ENCODE measurements at regions of chr10 and their contacts with region 1.

Region 1: GRCh38 chr10:97025613-97026242 is 160.0 kb downstream of the SLIT1 start:
- DNase-seq: peak in 1 of 2 donors; percentile 37
- ATAC-seq: peak in 5 of 8 donors; percentile 25 to 48 (median 35)
- H3K4me3 ChIP-seq: no peak overlapping the region
- H3K27ac ChIP-seq: peak overlapping the region in 3 of 10 donors; percentile 15 to 78 (median 21)
- H3K4me1 ChIP-seq: peaks cover 9 to 33% (median 23%) of the 10 kb centered on the region in 9 donors
- H3K27me3 ChIP-seq: no peaks in the 10 kb centered on the region
- CTCF ChIP-seq: peak; percentile 28 to 73 (median 66)

Region 2: GRCh38 chr10:96395931-96396877 is 629.5 kb before region 1 on chr10:
- intact Hi-C with region 1: loop called in 3 of 10 experiments (anchors 10 kb)
- DNase-seq: peak; percentile 58 to 65
- ATAC-seq: peak in 7 of 8 donors; percentile 44 to 77 (median 72)
- H3K4me3 ChIP-seq: no peak overlapping the region
- H3K27ac ChIP-seq: peak overlapping the region in 1 of 10 donors; percentile 64
- H3K4me1 ChIP-seq: peaks cover 0 to 51% (median 25%) of the 10 kb centered on the region in 9 donors
- H3K27me3 ChIP-seq: peaks cover 0 to 18% (median 0%) of the 10 kb centered on the region in 7 donors
- CTCF ChIP-seq: peak; percentile 65 to 92 (median 85)

Region 3: DNA sequence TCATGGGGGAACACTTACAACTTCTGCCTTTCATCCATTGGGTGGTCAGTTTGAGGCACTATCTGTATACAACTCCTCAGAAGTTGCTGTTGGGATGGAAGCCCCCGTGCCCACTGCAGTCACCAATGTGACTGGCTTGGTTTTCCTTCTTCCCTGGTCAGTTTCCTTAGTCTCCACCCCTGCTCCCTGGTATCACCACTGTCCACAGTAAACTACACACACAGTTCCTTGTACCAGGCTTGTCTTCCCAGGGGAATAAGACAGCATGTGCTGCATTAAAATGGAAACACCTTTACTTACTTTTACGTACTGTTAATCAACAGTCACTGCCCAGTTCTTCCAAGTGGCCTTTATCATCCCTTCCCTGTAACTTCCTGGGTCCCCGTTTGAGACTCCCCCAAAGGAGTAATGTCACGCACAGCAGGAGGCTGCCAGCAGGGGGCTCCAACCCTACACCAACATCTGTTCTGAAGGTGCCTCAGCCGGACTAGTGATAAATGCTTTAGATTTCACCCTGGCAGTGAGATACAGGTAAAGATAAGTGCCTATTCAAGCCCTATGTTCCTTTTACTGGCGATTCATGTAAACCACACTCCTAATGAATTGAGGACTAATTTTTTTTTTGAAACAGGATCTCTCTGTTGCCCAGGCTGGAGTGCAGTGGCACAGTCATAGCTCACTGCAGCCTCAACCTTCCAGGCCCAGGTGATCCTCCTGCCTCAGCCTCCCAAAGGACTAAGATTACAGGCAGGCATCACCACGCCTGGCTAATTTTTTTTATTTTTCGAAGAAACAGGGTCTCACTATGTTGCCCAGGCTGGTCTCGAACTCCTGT is 260.1 kb before region 1 on chr10:
- intact Hi-C with region 1: loop called in 6 of 10 experiments (anchors 1 to 10 kb)
- DNase-seq: peak; percentile 48 to 69
- ATAC-seq: peak in 5 of 8 donors; percentile 60 to 69 (median 66)
- H3K4me3 ChIP-seq: no peak overlapping the region
- H3K27ac ChIP-seq: no peak overlapping the region
- H3K4me1 ChIP-seq: peaks cover 0 to 5% (median 0%) of the 10 kb centered on the region in 9 donors
- H3K27me3 ChIP-seq: peaks cover 0 to 5% (median 0%) of the 10 kb centered on the region in 7 donors
- CTCF ChIP-seq: peak; percentile 51 to 85 (median 74)

Region 4: GRCh38 chr10:96910488-96911395 is 115.0 kb before region 1 on chr10:
- intact Hi-C with region 1: loop called in 3 of 10 experiments (anchors 2 to 10 kb)
- DNase-seq: peak in 1 of 2 donors; percentile 18
- ATAC-seq: peak in 4 of 8 donors; percentile 37 to 54 (median 52)
- H3K4me3 ChIP-seq: no peak overlapping the region
- H3K27ac ChIP-seq: no peak overlapping the region
- H3K4me1 ChIP-seq: peaks cover 0 to 59% (median 19%) of the 10 kb centered on the region in 9 donors
- H3K27me3 ChIP-seq: no peaks in the 10 kb centered on the region
- CTCF ChIP-seq: peak; percentile 27 to 71 (median 62)

Region 5: DNA sequence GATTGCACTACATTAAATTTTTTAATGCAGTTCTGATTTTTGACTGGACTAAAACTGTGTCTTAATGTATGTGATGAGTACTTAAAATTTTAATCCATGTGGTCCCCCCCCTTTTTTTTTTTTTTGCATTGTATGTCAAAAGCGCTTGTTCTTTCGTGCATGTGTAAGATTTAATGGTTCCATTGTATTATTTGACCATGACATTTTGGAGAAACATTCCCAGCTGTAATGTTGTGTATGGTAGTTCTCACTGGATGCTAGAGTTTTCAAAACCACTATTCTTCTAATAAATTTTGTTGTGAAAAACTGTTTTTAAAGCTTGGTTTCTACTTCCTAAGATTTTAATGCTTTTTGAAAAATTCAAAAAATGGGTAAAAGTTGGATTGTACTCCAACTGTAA is 61.6 kb before region 1 on chr10:
- intact Hi-C with region 1: loop called in 1 of 10 experiments (anchors 2 kb)
- DNase-seq: no peak
- ATAC-seq: no peak
- H3K4me3 ChIP-seq: no peak overlapping the region
- H3K27ac ChIP-seq: no peak overlapping the region
- H3K4me1 ChIP-seq: peaks cover 0 to 15% (median 4%) of the 10 kb centered on the region in 9 donors
- H3K27me3 ChIP-seq: no peaks in the 10 kb centered on the region
- CTCF ChIP-seq: no peak

Measured in heart right ventricle (tissue), 16 donors.